K562 (cell line): ENCODE measurements at regions of chr6 and their contacts with region 1.

Region 1: GRCh38 chr6:4155848-4156466 is 20.6 kb upstream of the ECI2 start:
- DNase-seq: peak; percentile 82 to 92 (median 85)
- ATAC-seq: peak; percentile 96
- H3K4me3 ChIP-seq: no peak overlapping the region
- H3K27ac ChIP-seq: no peak overlapping the region
- H3K4me1 ChIP-seq: peaks cover 0 to 2% of the 10 kb centered on the region in 2 experiments; a peak in 1 of 5 replicates
- H3K27me3 ChIP-seq: peaks cover 22 to 41% of the 10 kb centered on the region in 2 experiments; a peak in 4 of 5 replicates
- CTCF ChIP-seq: peak; percentile 86 to 94 (median 90)
- EP300 ChIP-seq: no peak
- POLR2A ChIP-seq: no peak
- RAD21 ChIP-seq: peak; percentile 91 to 95

Region 2: DNA sequence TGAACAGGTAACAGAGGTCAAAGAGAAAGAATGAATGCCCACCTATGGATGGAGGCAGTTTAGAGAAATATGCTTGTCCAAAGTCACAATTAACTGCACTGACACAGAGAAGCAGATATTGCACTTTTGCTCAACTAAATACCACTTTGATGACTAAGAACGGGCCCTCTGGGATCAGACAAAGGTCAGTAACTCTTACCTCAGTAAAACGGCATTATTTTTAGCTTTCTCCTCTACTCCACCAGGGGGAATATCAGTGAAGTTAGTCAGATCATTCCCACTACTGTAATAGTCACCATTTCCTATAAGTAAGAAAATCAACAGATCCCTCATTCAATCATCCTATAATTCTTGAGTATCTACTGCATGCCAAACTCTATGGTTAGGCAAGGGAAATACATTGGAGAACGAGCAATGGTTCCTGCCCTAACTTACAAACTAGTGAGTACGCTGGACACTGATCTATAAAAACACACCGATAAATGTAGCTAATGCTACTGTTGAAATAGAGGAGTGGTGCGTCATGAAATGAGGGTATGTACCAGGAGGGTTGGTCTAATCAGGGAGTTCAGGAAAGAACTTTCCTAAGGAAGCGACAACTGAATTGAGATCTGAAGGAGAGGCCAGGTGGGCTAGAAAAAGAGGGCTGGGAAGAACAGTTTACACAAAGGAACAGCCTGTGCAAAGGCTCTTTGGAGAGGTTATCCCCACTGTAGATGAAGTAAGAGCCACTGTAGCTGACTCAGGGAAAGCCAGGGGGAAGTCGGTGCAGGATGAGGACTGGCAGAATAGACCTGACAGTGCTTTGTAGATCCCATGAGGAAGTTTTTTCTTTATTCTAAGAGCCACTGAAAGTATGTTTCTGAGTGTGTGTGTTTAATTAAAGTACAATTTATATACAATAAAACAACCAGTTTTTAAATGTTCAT is 29.8 kb before region 1 on chr6:
- CTCF ChIA-PET with region 1: no interaction called
- POLR2A ChIA-PET with region 1: no interaction called
- in situ Hi-C with region 1: no loop called
- intact Hi-C with region 1: loop called (anchors 1 kb)
- DNase-seq: peak in 2 of 4 experiments; percentile 45 to 46
- ATAC-seq: peak; percentile 81
- H3K4me3 ChIP-seq: no peak overlapping the region
- H3K27ac ChIP-seq: 0 out of 3 replicates have a peak overlapping the region, but pooled peaks have one; percentile 18
- H3K4me1 ChIP-seq: peaks cover 0 to 33% of the 10 kb centered on the region in 2 experiments; a peak in 2 of 5 replicates
- H3K27me3 ChIP-seq: no peaks in the 10 kb centered on the region
- CTCF ChIP-seq: peak; percentile 29 to 42 (median 31); a peak in 3 of 6 replicates
- EP300 ChIP-seq: no peak
- POLR2A ChIP-seq: no peak
- RAD21 ChIP-seq: peak in 1 of 2 experiments; percentile 49; a peak in 2 of 4 replicates

Region 3: DNA sequence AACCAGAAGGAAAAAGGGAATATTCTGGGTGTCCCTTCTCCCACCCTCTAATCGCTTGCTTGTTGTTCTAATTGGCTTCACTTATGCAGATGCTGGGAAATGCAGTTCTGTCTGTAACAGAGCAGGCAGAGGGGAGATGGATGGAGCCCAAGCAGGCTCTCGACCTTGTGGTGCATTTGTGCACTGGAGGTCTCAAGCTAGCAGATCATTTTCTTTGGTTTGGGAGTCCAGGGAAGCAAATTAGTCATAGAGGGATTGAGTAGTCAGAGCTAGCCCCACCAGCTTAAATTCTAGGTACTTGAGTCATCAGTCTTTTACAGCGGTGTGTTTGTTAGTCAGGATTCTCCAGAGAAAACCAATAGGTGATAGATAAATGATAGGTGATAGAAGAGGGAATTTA is 214.1 kb after region 1 on chr6:
- CTCF ChIA-PET with region 1: no interaction called
- POLR2A ChIA-PET with region 1: no interaction called
- in situ Hi-C with region 1: no loop called
- intact Hi-C with region 1: no loop called
- DNase-seq: no peak
- ATAC-seq: no peak
- H3K4me3 ChIP-seq: no peak overlapping the region
- H3K27ac ChIP-seq: no peak overlapping the region
- H3K4me1 ChIP-seq: peaks cover 9 to 19% of the 10 kb centered on the region in 2 experiments; a peak in 4 of 5 replicates
- H3K27me3 ChIP-seq: peaks cover 7 to 20% of the 10 kb centered on the region in 2 experiments; a peak in 4 of 5 replicates
- CTCF ChIP-seq: no peak
- EP300 ChIP-seq: no peak
- POLR2A ChIP-seq: no peak
- RAD21 ChIP-seq: no peak